B cell (primary cell): ENCODE measurements at regions of chr4 and their contacts with region 1.

Region 1: DNA sequence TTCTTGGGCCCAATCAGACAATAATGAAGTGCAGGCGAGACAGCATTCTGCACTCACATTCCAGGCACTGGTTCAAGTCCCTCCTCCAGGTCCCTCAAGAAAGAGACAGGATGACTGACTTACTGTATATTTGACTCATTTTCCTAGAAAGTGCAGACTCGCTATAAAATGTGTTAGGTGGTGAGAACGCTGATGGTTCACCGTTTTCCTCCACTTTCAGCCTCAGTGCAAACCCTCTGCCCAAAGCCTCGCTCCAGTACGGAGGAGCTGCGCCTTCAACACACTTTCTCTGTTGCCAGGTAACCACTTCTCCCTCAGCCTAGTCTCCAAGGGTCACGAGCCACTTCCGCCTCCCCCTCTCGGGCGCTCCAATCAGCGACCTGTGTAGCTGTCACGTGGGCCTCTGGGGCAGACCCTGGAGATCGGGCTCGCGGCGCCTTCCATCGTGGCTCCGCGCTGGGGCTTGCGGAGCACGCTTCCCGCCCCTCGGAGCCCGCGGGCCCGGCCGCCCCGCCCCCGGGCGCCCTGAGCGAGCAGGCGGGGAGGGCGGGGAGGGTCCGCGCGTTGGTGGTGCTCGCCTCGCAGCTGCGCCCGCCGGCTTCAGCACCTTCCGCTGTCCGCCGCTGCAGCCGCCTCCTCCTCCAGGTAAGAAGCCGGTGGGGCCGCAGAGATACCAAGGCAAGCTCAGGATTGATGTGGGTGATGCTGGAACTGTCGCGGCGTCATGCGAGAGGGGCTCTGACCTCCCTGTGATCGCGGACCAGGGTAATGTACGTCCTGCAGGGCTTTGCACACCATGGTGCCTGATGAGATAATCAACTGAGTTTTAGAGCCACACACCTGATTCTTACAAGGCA is at the start of gene WDR17:
- DNase-seq: peak; percentile 92
- ATAC-seq: peak; percentile 94
- H3K4me3 ChIP-seq: peak within 1 kb of the TSS; percentile 51 to 72 (median 65)
- H3K4me3 Mint-ChIP-seq: peak within 1 kb of the TSS; percentile 94
- H3K27ac ChIP-seq: peak within 1 kb of the TSS in 1 of 2 donors; percentile 28
- H3K27ac Mint-ChIP-seq: peak within 1 kb of the TSS; percentile 78
- H3K4me1 ChIP-seq: peaks cover 8 to 10% of the 10 kb centered on the region in 2 donors
- H3K4me1 Mint-ChIP-seq: peaks cover 12% of the 10 kb centered on the region
- H3K27me3 ChIP-seq: no peaks in the 10 kb centered on the region
- H3K27me3 Mint-ChIP-seq: peaks cover 15% of the 10 kb centered on the region
- CTCF ChIP-seq: no peak
- total RNA-seq, gene WDR17: 7.1 and 8.8 TPM in 2 replicates

Region 2: GRCh38 chr4:174282836-174283506 is 1782.7 kb before region 1 on chr4:
- CTCF ChIA-PET with region 1: no interaction called
- POLR2A ChIA-PET with region 1: no interaction called
- intact Hi-C with region 1: loop called (anchors 10 kb)
- DNase-seq: peak; percentile 89
- ATAC-seq: peak; percentile 95
- H3K4me3 ChIP-seq: peak overlapping the region; percentile 71 to 100 (median 98)
- H3K4me3 Mint-ChIP-seq: peak overlapping the region; percentile 100
- H3K27ac ChIP-seq: peak overlapping the region; percentile 91 to 98
- H3K27ac Mint-ChIP-seq: peak overlapping the region; percentile 100
- H3K4me1 ChIP-seq: peaks cover 16 to 20% of the 10 kb centered on the region in 2 donors
- H3K4me1 Mint-ChIP-seq: peaks cover 61% of the 10 kb centered on the region
- H3K27me3 ChIP-seq: no peaks in the 10 kb centered on the region
- H3K27me3 Mint-ChIP-seq: no peaks in the 10 kb centered on the region
- CTCF ChIP-seq: no peak

Region 3: DNA sequence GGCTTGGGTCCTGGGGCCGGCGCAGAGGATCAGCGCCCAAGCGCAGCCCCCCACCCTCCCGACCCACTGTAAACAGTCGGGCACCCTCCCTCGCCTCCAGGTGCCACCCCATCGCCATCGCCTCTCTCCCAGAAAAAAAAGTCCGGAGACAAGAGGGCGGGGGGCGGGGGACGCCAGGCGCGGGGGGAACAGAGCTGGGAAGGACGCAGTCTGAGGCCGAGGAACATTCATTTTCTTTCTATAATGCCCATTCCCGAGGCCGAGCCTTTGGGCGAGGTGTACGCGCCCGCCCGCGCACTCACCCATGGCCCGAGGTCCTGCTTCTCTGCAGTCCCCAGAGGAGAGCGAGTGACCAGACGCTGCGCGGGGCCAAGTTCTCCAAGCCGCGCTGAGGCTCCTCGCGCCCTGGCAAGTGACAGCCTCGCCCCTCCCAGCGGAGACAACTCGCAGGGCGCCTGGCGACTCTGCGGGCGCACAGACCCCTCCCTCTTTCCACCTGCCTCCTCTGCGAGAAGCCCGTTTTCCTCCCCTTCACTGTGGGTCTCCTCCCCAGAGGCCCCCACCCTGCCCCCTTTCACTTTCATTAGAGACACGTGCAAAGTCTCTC is 63.6 kb before region 1 on chr4:
- CTCF ChIA-PET with region 1: no interaction called
- POLR2A ChIA-PET with region 1: no interaction called
- intact Hi-C with region 1: loop called (anchors 5 kb)
- DNase-seq: peak; percentile 63
- ATAC-seq: peak; percentile 80
- H3K4me3 ChIP-seq: peak overlapping the region in 4 of 5 experiments; percentile 61 to 66 (median 64)
- H3K4me3 Mint-ChIP-seq: peak overlapping the region; percentile 80
- H3K27ac ChIP-seq: no peak overlapping the region
- H3K27ac Mint-ChIP-seq: no peak overlapping the region
- H3K4me1 ChIP-seq: peaks cover 13 to 18% of the 10 kb centered on the region in 2 donors
- H3K4me1 Mint-ChIP-seq: peaks cover 22% of the 10 kb centered on the region
- H3K27me3 ChIP-seq: peaks cover 0 to 6% (median 0%) of the 10 kb centered on the region in 4 experiments
- H3K27me3 Mint-ChIP-seq: peaks cover 35% of the 10 kb centered on the region
- CTCF ChIP-seq: no peak

Region 4: GRCh38 chr4:176123710-176124407 is 58.2 kb after region 1 on chr4:
- CTCF ChIA-PET with region 1: interaction called, 5 read pairs
- POLR2A ChIA-PET with region 1: no interaction called
- intact Hi-C with region 1: loop called (anchors 5 kb)
- DNase-seq: peak; percentile 29
- ATAC-seq: peak; percentile 87
- H3K4me3 ChIP-seq: no peak overlapping the region
- H3K4me3 Mint-ChIP-seq: peak overlapping the region; percentile 11
- H3K27ac ChIP-seq: no peak overlapping the region
- H3K27ac Mint-ChIP-seq: no peak overlapping the region
- H3K4me1 ChIP-seq: no peaks in the 10 kb centered on the region
- H3K4me1 Mint-ChIP-seq: peaks cover 9% of the 10 kb centered on the region
- H3K27me3 ChIP-seq: no peaks in the 10 kb centered on the region
- H3K27me3 Mint-ChIP-seq: no peaks in the 10 kb centered on the region
- CTCF ChIP-seq: peak; percentile 53

Region 5: GRCh38 chr4:176195184-176195978 is 129.7 kb after region 1 on chr4 and contains the start of gene SPATA4:
- CTCF ChIA-PET with region 1: no interaction called
- POLR2A ChIA-PET with region 1: no interaction called
- intact Hi-C with region 1: loop called (anchors 1 kb)
- DNase-seq: peak; percentile 96
- ATAC-seq: peak; percentile 98
- H3K4me3 ChIP-seq: peak within 1 kb of the TSS; percentile 53 to 77 (median 63)
- H3K4me3 Mint-ChIP-seq: peak within 1 kb of the TSS; percentile 94
- H3K27ac ChIP-seq: peak within 1 kb of the TSS; percentile 65 to 73
- H3K27ac Mint-ChIP-seq: peak within 1 kb of the TSS; percentile 87
- H3K4me1 ChIP-seq: peaks cover 9 to 10% of the 10 kb centered on the region in 2 donors
- H3K4me1 Mint-ChIP-seq: peaks cover 9% of the 10 kb centered on the region
- H3K27me3 ChIP-seq: peaks cover 0 to 22% (median 14%) of the 10 kb centered on the region in 4 experiments
- H3K27me3 Mint-ChIP-seq: peaks cover 44% of the 10 kb centered on the region
- CTCF ChIP-seq: no peak
- total RNA-seq, gene SPATA4: not detected in 2 replicates

Region 6: GRCh38 chr4:176319704-176320339 is 254.2 kb after region 1 on chr4 and contains the start of gene SPCS3:
- CTCF ChIA-PET with region 1: no interaction called
- POLR2A ChIA-PET with region 1: no interaction called
- intact Hi-C with region 1: loop called (anchors 1 kb)
- DNase-seq: peak; percentile 97
- ATAC-seq: peak; percentile 91
- H3K4me3 ChIP-seq: peak within 1 kb of the TSS; percentile 77 to 91 (median 84)
- H3K4me3 Mint-ChIP-seq: peak within 1 kb of the TSS; percentile 93
- H3K27ac ChIP-seq: peak within 1 kb of the TSS; percentile 84 to 95
- H3K27ac Mint-ChIP-seq: peak within 1 kb of the TSS; percentile 97
- H3K4me1 ChIP-seq: peaks cover 21 to 44% of the 10 kb centered on the region in 2 donors
- H3K4me1 Mint-ChIP-seq: peaks cover 43% of the 10 kb centered on the region
- H3K27me3 ChIP-seq: no peaks in the 10 kb centered on the region
- H3K27me3 Mint-ChIP-seq: no peaks in the 10 kb centered on the region
- CTCF ChIP-seq: no peak
- total RNA-seq, gene SPCS3: 92.4 and 102 TPM in 2 replicates